ENCODE measurements at regions of chr3 and their contacts with region 1.

Region 1: GRCh38 chr3:164470471-164470870 is 607.8 kb downstream of the SI start:
- DNase-seq: no peak
- ATAC-seq: no peak

Region 2: GRCh38 chr3:164416491-164417234 is 53.8 kb before region 1 on chr3:
- intact Hi-C with region 1: loop called (anchors 2 kb)
- DNase-seq: no peak
- ATAC-seq: no peak